ENCODE measurements at regions of chr10 and their contacts with region 1.

Region 1: DNA sequence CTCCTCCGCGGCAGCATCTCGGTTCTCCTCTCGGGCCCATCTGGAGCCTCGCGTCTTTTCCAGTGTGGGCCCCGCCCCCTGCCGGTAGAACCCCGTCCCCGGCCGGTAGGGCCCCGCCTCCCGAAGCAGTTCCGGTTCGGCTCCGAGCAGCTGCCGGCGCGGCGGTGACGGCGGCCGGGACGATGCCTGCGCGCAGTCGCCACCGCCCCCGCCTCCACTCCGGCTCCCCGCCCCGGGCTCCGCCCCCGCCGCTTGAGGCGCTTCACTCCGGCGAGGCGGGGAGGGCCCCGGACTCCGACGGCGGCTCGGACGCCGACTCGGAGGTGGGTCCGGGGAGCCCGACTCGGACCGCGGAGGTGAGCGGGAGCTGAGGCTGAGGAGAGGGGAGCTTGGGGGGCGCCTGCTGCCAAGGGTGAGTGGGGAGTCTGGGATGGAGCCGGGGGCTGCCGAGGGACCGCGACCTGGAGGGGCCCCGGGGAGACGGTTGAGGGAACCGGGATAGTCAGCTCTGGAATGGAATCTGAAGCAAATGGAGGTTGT is at the start of gene SAMD8:
- DNase-seq: peak; percentile 99
- ATAC-seq: peak; percentile 90
- H3K4me3 Mint-ChIP-seq: peak within 1 kb of the TSS; percentile 99
- H3K27ac Mint-ChIP-seq: peak within 1 kb of the TSS; percentile 99
- H3K4me1 Mint-ChIP-seq: peaks cover 51% of the 10 kb centered on the region
- H3K27me3 Mint-ChIP-seq: no peaks in the 10 kb centered on the region
- total RNA-seq, gene SAMD8: 20.5 to 20.9 TPM

Region 2: DNA sequence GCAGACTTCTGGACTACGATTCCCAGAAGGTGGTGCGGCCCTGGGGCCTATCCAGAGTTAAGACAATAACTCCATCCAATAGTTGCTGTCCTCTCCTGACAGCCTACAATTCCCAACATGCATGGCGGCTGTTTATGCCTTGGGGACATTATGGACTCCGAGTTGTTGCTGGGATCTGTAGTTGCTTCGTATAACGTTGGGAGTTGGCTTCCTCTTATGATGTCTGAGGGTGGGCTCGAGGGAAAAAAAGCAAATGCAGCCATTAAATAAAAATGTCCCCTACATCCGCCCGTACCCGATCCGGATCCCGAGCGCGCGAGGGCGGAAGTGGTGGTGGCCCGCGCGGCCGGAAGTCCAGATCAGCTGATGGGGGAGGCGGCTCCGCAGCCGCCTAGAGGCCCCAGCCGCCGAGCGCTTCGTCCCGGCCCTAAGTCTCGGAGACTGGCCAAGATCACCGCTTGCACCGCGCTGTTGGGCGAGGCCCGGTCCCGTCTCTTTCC is 1326.2 kb before region 1 on chr10 and contains the start of gene ZSWIM8:
- CTCF ChIA-PET with region 1: no interaction called
- POLR2A ChIA-PET with region 1: no interaction called
- intact Hi-C with region 1: loop called in 1 of 2 experiments (anchors 10 kb)
- DNase-seq: peak; percentile 90
- ATAC-seq: peak; percentile 85
- H3K4me3 Mint-ChIP-seq: peak within 1 kb of the TSS; percentile 83
- H3K27ac Mint-ChIP-seq: peak within 1 kb of the TSS; percentile 98
- H3K4me1 Mint-ChIP-seq: peaks cover 46% of the 10 kb centered on the region
- H3K27me3 Mint-ChIP-seq: no peaks in the 10 kb centered on the region
- total RNA-seq, gene ZSWIM8: 40.1 to 67.3 TPM

Region 3: GRCh38 chr10:73997787-73998622 is 1113.4 kb before region 1 on chr10 and contains the start of gene VCL:
- CTCF ChIA-PET with region 1: no interaction called
- POLR2A ChIA-PET with region 1: no interaction called
- intact Hi-C with region 1: loop called in 1 of 2 experiments (anchors 5 kb)
- DNase-seq: peak; percentile 97
- ATAC-seq: peak; percentile 98
- H3K4me3 Mint-ChIP-seq: peak within 1 kb of the TSS; percentile 89
- H3K27ac Mint-ChIP-seq: peak within 1 kb of the TSS; percentile 97
- H3K4me1 Mint-ChIP-seq: peaks cover 39% of the 10 kb centered on the region
- H3K27me3 Mint-ChIP-seq: no peaks in the 10 kb centered on the region
- total RNA-seq, gene VCL: 20.7 to 22.7 TPM

Region 4: GRCh38 chr10:74176380-74177139 is 934.9 kb before region 1 on chr10:
- CTCF ChIA-PET with region 1: no interaction called
- POLR2A ChIA-PET with region 1: interaction called, 3 read pairs
- intact Hi-C with region 1: loop called in 1 of 2 experiments (anchors 1 kb)
- DNase-seq: peak; percentile 98
- ATAC-seq: peak; percentile 94
- H3K4me3 Mint-ChIP-seq: peak overlapping the region; percentile 89
- H3K27ac Mint-ChIP-seq: peak overlapping the region; percentile 95
- H3K4me1 Mint-ChIP-seq: peaks cover 37% of the 10 kb centered on the region
- H3K27me3 Mint-ChIP-seq: no peaks in the 10 kb centered on the region

Region 5: GRCh38 chr10:74518061-74518460 is 593.4 kb before region 1 on chr10:
- CTCF ChIA-PET with region 1: no interaction called
- POLR2A ChIA-PET with region 1: no interaction called
- intact Hi-C with region 1: no loop called
- DNase-seq: no peak
- ATAC-seq: no peak
- H3K4me3 Mint-ChIP-seq: no peak overlapping the region
- H3K27ac Mint-ChIP-seq: no peak overlapping the region
- H3K4me1 Mint-ChIP-seq: peaks cover 2% of the 10 kb centered on the region
- H3K27me3 Mint-ChIP-seq: no peaks in the 10 kb centered on the region

Region 6: DNA sequence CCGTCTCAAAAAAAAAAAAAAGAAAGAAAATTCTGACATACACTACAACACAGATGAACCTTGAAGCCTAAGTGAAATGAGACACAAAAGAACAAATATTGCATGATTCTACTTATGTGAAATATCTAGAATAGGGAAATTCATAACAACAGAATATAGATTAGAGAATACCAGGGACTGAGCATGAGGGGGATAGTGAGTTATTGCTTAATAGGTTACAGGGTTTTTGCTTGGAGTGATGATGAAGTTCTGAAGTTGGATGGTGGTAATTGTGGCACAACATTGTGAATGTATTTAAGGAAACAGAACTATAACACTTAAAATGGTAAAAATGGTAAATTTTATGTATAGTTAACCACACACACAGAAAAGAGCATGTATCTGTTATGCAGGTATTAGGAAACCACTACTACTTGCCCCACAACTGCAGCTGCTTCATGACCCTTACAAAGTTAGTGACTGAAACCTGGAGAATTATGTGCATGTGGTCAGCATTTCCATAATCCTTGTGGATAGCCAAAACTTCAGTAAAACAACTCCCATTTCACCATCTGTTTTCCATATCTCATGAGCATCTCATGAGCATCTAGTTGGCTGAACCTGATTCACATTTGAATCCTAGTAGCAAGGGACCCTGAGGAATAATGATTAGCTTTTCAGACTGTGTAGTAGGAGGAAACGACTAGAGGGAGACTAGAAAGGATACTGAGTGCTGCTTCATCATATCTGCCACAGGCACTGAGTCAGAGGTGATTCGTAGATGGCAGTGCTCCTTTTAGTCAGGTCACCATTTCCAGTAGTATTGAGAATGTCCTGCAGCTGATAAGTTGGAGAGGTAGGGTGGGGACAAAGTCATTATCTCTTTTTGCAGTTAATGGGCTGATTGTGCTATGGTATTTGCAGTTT is 26.3 kb after region 1 on chr10:
- CTCF ChIA-PET with region 1: interaction called, 4 read pairs
- POLR2A ChIA-PET with region 1: no interaction called
- intact Hi-C with region 1: loop called in 1 of 2 experiments (anchors 2 kb)
- DNase-seq: peak; percentile 66
- ATAC-seq: peak; percentile 94
- H3K4me3 Mint-ChIP-seq: no peak overlapping the region
- H3K27ac Mint-ChIP-seq: peak overlapping the region; percentile 67
- H3K4me1 Mint-ChIP-seq: peaks cover 37% of the 10 kb centered on the region
- H3K27me3 Mint-ChIP-seq: no peaks in the 10 kb centered on the region

Region 7: GRCh38 chr10:75187961-75188426 is 76.6 kb after region 1 on chr10:
- CTCF ChIA-PET with region 1: interaction called, 3 read pairs
- POLR2A ChIA-PET with region 1: no interaction called
- intact Hi-C with region 1: loop called in 1 of 2 experiments (anchors 10 kb)
- DNase-seq: peak; percentile 81
- ATAC-seq: peak; percentile 91
- H3K4me3 Mint-ChIP-seq: no peak overlapping the region
- H3K27ac Mint-ChIP-seq: peak overlapping the region; percentile 72
- H3K4me1 Mint-ChIP-seq: peaks cover 10% of the 10 kb centered on the region
- H3K27me3 Mint-ChIP-seq: no peaks in the 10 kb centered on the region

Region 8: DNA sequence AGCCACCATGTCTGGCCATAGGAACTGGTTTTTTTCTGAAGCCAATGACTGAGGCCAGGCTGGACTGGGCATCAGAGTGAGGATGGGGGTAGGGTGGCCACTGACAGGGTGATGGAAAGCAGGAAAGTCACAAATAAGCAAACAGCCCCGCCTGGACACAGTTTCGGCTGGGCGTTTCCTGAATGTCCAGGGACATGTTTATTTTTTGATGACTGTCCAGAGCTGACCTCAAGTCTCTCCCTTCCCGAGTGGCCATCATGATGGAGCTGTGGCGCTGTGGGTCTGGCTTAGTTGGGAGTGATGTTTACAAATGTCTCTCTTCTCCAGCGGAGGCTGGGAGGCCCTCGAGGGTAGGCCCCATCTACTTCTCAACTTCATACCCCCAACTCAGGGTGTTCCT is 161.5 kb after region 1 on chr10:
- CTCF ChIA-PET with region 1: no interaction called
- POLR2A ChIA-PET with region 1: no interaction called
- intact Hi-C with region 1: no loop called
- DNase-seq: no peak
- ATAC-seq: no peak
- H3K4me3 Mint-ChIP-seq: no peak overlapping the region
- H3K27ac Mint-ChIP-seq: no peak overlapping the region
- H3K4me1 Mint-ChIP-seq: no peaks in the 10 kb centered on the region
- H3K27me3 Mint-ChIP-seq: peaks cover 9% of the 10 kb centered on the region